Activated B cell treated with CpG ODN at 0.5 μM for 24 hours (primary cell): ENCODE measurements at regions of chr14 and their contacts with region 1.

Region 1: DNA sequence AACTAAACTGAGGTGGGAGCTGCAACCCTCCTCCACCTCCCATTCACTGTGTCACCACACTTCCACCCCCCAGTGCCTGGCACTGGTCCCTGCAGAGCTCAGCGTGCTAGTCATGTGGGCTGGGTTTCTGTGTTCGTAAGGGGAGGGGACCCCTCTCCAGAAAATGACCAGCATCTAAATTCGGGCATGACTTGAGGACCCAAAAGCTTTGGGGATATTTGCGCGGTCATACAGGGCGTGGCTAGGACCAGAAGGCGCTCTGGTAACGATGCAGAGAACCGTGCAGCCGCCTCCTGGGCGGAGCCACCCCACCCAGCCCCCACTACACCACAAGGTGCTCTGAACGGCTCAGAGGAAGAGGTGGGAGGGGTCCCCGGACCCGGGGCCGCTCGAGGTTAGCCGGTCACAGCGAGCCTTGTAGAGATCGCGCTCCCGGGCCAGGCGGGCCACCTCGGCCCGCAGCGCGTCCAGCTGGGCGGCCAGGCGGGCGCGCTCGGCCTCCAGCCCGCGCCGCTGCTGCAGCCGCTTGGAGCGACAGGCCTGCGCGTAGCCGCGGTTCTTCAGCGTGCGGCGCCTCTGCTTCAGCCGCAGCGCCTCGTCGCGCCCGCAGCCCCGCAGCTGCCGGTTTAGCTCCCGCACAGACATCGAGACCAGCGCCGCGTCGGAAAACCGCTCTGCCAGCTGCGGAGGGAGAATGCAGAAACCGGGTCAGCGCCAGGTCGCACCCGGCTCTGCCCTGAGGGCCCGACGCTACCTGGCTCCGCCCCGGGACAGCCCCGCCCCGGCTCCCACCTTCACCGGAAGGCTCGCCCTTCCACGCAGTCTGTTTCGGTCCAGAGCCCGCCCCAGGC is 9.8 kb downstream of the CPNE6 start:
- DNase-seq: peak; percentile 75
- ATAC-seq: peak; percentile 95
- H3K4me3 Mint-ChIP-seq: peak overlapping the region; percentile 82
- H3K27ac Mint-ChIP-seq: peak overlapping the region; percentile 83
- H3K4me1 Mint-ChIP-seq: peaks cover 32% of the 10 kb centered on the region
- H3K27me3 Mint-ChIP-seq: no peaks in the 10 kb centered on the region
- CTCF ChIP-seq: no peak

Region 2: DNA sequence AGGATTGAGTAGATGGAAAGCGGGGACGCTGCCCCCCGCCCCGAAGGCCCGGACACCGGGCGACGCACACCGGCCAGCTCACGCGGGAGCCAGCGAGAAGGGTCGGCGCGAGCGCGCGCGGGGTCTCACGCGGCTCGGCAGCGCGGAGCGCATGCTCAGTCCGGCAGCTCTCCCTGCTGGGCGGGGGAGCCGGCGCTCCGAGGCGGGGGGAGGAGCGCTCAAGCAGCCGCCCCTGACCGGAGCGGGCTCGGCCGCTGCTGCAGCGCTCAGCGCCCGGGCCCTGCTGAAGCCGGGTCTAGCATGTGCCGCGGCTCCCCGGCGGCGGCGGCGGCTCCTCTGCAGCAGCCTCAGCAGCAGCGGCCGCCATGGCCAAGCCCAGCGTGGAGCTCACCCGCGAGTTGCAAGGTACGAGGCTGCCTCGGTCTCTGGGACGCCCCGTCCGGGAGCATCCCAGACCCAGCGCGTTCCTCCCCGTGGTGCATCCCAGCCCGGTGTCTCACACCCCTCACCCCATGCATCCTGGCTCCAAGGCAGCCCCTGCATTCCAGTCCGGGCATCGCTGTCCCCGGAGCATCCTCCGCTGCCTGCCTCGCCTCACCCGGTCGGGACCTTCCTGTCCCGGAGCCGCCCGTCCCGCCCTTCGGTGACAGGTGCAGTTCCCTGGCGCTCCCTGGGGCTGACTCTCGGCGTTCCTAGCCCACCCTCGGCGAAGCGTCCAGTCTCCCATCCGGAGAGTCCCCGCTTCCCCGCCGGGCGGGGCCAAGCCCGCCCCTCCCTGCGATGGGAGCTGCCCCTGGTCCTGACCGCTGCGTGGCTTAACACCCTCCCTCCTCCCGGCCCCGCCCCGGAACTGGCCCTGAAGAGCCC is 29.1 kb before region 1 on chr14 and contains the start of gene CARMIL3:
- CTCF ChIA-PET with region 1: interaction called, 14 read pairs
- POLR2A ChIA-PET with region 1: interaction called, 11 read pairs
- intact Hi-C with region 1: loop called (anchors 1 kb)
- DNase-seq: peak; percentile 69
- ATAC-seq: peak; percentile 86
- H3K4me3 Mint-ChIP-seq: peak within 1 kb of the TSS; percentile 82
- H3K27ac Mint-ChIP-seq: peak within 1 kb of the TSS; percentile 71
- H3K4me1 Mint-ChIP-seq: peaks cover 34% of the 10 kb centered on the region
- H3K27me3 Mint-ChIP-seq: peaks cover 6% of the 10 kb centered on the region
- CTCF ChIP-seq: no peak
- total RNA-seq, gene CARMIL3: 3.5 and 3.9 TPM in 2 replicates

Region 3: GRCh38 chr14:24058260-24058950 is 22.7 kb before region 1 on chr14:
- CTCF ChIA-PET with region 1: interaction called, 14 read pairs
- POLR2A ChIA-PET with region 1: interaction called, 16 read pairs
- intact Hi-C with region 1: no loop called
- DNase-seq: no peak
- ATAC-seq: peak; percentile 84
- H3K4me3 Mint-ChIP-seq: no peak overlapping the region
- H3K27ac Mint-ChIP-seq: no peak overlapping the region
- H3K4me1 Mint-ChIP-seq: peaks cover 2% of the 10 kb centered on the region
- H3K27me3 Mint-ChIP-seq: no peaks in the 10 kb centered on the region
- CTCF ChIP-seq: no peak

Region 4: DNA sequence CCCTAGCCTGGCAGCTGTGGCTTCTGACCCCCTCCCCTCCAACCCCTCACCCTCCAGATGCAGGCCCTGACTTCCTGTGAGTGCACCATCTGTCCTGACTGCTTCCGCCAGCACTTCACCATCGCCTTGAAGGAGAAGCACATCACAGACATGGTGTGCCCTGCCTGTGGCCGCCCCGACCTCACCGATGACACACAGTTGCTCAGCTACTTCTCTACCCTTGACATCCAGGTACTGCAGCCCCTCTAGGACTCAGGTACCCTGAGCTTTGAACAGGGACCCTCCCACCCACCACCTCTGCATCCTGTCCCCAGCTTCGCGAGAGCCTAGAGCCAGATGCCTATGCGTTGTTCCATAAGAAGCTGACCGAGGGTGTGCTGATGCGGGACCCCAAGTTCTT is 74.0 kb after region 1 on chr14:
- CTCF ChIA-PET with region 1: no interaction called
- POLR2A ChIA-PET with region 1: no interaction called
- intact Hi-C with region 1: no loop called
- DNase-seq: no peak
- ATAC-seq: no peak
- H3K4me3 Mint-ChIP-seq: no peak overlapping the region
- H3K27ac Mint-ChIP-seq: no peak overlapping the region
- H3K4me1 Mint-ChIP-seq: peaks cover 2% of the 10 kb centered on the region
- H3K27me3 Mint-ChIP-seq: no peaks in the 10 kb centered on the region
- CTCF ChIP-seq: no peak